H1 (cell line): ENCODE measurements at regions of chr19 and their contacts with region 1.

Region 1: GRCh38 chr19:57362997-57363705 is at the starts of genes TRAPPC2B and ZNF547:
- DNase-seq: peak; percentile 98 to 99
- H3K4me3 ChIP-seq: peak within 1 kb of the TSS; percentile 64 to 81 (median 66)
- H3K27ac ChIP-seq: peak within 1 kb of the TSS; percentile 72
- H3K4me1 ChIP-seq: peaks cover 0 to 2% (median 1%) of the 10 kb centered on the region in 4 experiments; a peak in 2 of 7 replicates
- H3K27me3 ChIP-seq: no peaks in the 10 kb centered on the region
- CTCF ChIP-seq: no peak
- EP300 ChIP-seq: no peak
- POLR2A ChIP-seq: peak; percentile 80 to 90
- RAD21 ChIP-seq: no peak
- total RNA-seq, gene TRAPPC2B: 7.9 and 8.7 TPM in 2 replicates
- total RNA-seq, gene ZNF547: 2.0 and 2.1 TPM in 2 replicates

Region 2: DNA sequence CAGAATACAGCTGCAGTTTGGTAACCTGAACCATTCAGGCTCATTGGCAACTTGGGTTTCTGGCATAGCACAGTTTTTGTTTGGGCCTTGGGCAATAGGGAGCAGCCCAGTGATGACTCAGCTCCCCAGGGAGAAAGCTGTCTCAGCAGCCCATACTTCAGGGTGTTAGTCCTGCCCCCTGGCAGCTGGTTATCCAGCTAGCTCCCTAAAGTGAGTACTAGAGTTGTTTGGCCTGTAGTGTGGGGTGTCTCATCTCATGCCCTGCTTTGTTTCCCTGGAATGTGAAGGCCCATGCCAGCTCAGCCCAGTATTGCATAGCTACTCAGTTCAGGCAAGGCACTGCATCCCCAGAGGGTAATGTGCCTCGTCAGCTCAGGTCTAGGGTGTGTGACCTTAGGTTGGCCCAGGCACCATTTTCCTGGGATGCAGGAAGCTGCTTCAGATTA is 61.1 kb before region 1 on chr19:
- CTCF ChIA-PET with region 1: no interaction called
- POLR2A ChIA-PET with region 1: no interaction called
- DNase-seq: no peak
- H3K4me3 ChIP-seq: no peak overlapping the region
- H3K27ac ChIP-seq: no peak overlapping the region
- H3K4me1 ChIP-seq: peaks cover 0 to 4% (median 2%) of the 10 kb centered on the region in 4 experiments; a peak in 2 of 7 replicates
- H3K27me3 ChIP-seq: no peaks in the 10 kb centered on the region
- CTCF ChIP-seq: no peak
- EP300 ChIP-seq: no peak
- POLR2A ChIP-seq: no peak
- RAD21 ChIP-seq: no peak

Region 3: GRCh38 chr19:57350877-57351805 is 12.0 kb before region 1 on chr19 and contains the start of gene ZNF304:
- CTCF ChIA-PET with region 1: no interaction called
- POLR2A ChIA-PET with region 1: interaction called, 10 read pairs
- DNase-seq: peak; percentile 80 to 86
- H3K4me3 ChIP-seq: peak within 1 kb of the TSS; percentile 88 to 100 (median 99)
- H3K27ac ChIP-seq: peak within 1 kb of the TSS; percentile 41
- H3K4me1 ChIP-seq: peaks cover 0 to 4% (median 4%) of the 10 kb centered on the region in 4 experiments; a peak in 5 of 7 replicates
- H3K27me3 ChIP-seq: no peaks in the 10 kb centered on the region
- CTCF ChIP-seq: no peak
- EP300 ChIP-seq: no peak
- POLR2A ChIP-seq: peak in 1 of 2 experiments; percentile 32; a peak in 2 of 3 replicates
- RAD21 ChIP-seq: no peak
- total RNA-seq, gene ZNF304: 9.1 and 10.5 TPM in 2 replicates

Region 4: DNA sequence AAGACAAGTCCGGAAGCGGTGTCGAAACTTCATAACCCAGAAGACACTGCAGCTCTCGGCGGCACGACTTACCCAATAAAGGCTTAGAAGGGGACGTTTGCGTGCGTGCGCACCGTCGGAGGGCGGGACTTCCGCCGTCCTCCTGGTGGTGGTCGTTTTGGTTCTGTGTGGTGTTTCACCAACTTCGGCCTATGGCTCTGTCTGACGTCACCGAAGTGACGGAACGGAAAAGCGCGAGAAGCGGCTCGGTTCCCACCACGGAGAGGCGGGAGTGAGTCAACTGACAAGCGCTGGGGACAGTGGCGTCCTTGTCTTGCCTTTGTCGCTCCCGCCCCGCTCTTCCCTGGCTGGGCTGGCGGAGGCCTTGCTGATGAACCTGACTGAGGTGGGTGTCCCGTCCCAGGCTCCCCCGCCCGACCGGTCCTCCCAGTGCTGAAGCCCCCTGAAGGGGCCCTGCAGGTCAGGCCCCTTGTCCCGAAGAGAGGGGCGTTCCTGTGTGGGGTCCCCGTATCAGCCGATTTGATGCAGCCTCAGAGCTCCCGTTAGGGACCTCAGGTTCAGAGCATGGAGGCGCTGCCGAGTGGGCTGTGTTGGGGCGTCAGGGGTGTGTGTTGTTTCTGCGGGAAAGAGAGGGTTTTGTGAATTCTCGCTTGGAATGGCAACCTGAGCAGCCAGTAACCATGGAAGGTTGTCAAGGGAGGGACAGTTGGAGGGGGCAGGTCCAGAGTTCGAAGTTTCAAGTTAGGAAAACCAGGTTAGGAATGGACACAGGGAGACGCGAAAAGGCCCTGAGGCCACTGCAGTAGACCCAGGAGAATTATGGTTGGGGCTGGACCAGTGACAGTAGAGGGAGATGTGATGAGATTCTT is 26.8 kb after region 1 on chr19 and contains the start of gene ZNF548:
- CTCF ChIA-PET with region 1: interaction called, 3 read pairs
- POLR2A ChIA-PET with region 1: interaction called, 20 read pairs
- DNase-seq: peak; percentile 96 to 99
- H3K4me3 ChIP-seq: peak within 1 kb of the TSS; percentile 54 to 88 (median 80)
- H3K27ac ChIP-seq: peak within 1 kb of the TSS; percentile 53; the same call in 1 of the 2 replicates
- H3K4me1 ChIP-seq: no peaks in the 10 kb centered on the region; a peak in 1 of 7 replicates
- H3K27me3 ChIP-seq: no peaks in the 10 kb centered on the region
- CTCF ChIP-seq: peak in 2 of 3 experiments; percentile 6 to 28; a peak in 3 of 4 replicates
- EP300 ChIP-seq: peak in 1 of 2 experiments; percentile 60; a peak in 1 of 3 replicates
- POLR2A ChIP-seq: peak in 1 of 2 experiments; percentile 71; a peak in 1 of 3 replicates
- RAD21 ChIP-seq: no peak; a peak in 1 of 4 replicates
- total RNA-seq, gene ZNF548: 8.9 and 9.9 TPM in 2 replicates

Region 5: DNA sequence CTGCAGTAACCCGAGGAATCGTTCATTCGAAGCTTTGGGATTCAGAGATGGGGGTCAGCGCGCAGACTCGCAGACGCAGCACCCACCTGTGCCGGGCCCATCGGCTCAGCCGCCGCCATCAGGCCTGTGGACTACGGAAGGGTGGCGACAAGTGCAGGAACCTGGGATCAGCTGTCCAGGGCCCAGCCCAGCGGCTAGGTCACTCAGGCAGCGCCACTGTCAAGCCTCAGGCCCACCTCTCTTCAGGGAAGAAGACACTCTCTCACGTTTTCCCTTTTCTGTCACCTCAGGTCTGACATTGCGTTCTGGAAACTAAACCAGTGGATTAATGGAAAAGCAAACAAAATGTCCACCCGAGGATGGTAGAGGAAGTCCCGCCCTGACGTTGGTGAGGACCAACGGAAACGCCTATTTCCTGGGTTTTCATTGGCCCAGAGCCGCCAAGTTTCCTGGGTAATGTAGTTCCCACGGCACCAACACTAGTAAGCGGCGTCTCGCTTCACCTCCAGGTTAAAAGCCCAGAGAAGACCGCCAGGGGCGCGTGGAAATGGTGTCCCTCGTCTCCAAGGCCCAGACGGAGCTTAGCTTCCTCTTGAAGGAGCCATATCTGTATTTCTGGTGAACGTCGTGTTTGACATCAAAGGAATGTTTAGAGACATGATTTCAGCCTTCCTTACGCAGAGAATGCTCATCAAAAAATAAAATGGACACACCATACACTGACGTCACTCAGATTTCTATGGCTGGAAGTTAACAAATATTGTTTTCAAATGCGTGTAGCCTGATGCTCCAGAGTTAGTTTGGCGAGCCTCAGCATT is 114.2 kb after region 1 on chr19 and contains the start of gene ZNF772:
- CTCF ChIA-PET with region 1: no interaction called
- POLR2A ChIA-PET with region 1: no interaction called
- DNase-seq: peak; percentile 84 to 93
- H3K4me3 ChIP-seq: peak within 1 kb of the TSS; percentile 89 to 97 (median 96)
- H3K27ac ChIP-seq: peak within 1 kb of the TSS; percentile 85
- H3K4me1 ChIP-seq: no peaks in the 10 kb centered on the region
- H3K27me3 ChIP-seq: peaks cover 0 to 1% (median 0%) of the 10 kb centered on the region in 4 experiments; a peak in 2 of 7 replicates
- CTCF ChIP-seq: peak; percentile 62 to 91 (median 80)
- EP300 ChIP-seq: no peak
- POLR2A ChIP-seq: peak in 1 of 2 experiments; percentile 68; a peak in 1 of 3 replicates
- RAD21 ChIP-seq: peak; percentile 37 to 48; a peak in 3 of 4 replicates
- total RNA-seq, gene ZNF772: 15.2 and 15.7 TPM in 2 replicates